ENCODE measurements at regions of chr9 and their contacts with region 1.

Region 1: DNA sequence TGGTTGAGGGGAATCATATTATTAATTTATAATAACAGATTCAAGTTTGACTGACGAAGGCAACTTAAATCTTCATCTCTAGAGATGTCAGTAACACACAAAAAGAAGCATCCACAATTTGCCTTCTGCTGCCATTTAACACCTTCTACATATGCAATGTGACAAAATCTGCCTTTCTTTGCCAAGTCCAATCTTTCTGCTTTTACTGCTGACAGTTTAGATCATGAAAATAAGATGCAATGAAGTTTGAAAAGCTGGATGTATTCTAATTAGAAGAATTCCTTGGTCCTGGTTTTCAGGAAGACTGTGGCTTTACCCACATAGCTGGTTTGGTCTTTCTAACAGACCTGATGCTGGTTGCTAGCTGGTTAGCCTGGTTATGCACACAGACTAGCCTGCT is 178.9 kb downstream of the ACER2 start:
- DNase-seq: no peak
- H3K4me3 ChIP-seq: no peak overlapping the region
- H3K27ac ChIP-seq: no peak overlapping the region
- H3K4me1 ChIP-seq: no peaks in the 10 kb centered on the region
- H3K27me3 ChIP-seq: no peaks in the 10 kb centered on the region
- CTCF ChIP-seq: no peak

Region 2: DNA sequence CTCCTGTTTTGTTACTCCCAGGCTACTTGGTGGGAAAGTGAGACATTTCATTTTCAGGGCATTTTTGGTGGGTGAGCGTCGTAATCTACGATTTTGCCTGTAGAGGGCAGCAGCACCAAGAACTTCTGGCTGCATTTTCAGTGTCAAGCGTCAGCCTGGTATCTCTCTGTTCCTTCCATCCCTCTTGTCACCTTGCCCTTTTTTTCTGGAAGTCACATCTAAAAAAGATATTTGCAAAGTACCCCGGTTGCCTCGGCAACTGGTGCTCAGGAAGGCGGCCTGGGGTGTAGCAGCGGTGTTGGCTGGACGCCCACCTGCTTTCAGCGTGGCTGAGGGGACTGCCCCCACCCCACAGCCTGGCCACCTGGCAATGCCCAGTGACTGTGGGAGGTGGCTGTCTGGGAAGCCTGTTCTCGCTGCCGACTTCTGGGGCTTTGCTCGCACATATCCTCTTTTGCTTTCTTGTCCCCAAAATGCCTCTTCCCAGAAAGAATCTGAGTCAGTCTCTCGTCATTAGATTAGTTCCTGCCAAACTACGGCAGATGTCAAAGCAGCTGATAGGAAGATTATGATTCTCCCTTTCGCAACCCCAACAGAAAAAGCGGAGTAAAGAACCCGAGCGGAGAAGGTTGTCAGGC is 94.4 kb before region 1 on chr9:
- CTCF ChIA-PET with region 1: interaction called, 15 read pairs
- POLR2A ChIA-PET with region 1: no interaction called
- intact Hi-C with region 1: no loop called
- DNase-seq: peak in 1 of 2 experiments; percentile 22
- H3K4me3 ChIP-seq: no peak overlapping the region
- H3K27ac ChIP-seq: no peak overlapping the region
- H3K4me1 ChIP-seq: no peaks in the 10 kb centered on the region
- H3K27me3 ChIP-seq: peaks cover 26% of the 10 kb centered on the region; the same call in 1 of the 2 replicates
- CTCF ChIP-seq: peak; percentile 69